Mammary epithelial cell (primary cell): ENCODE measurements at regions of chr18 and their contacts with region 1.

Region 1: DNA sequence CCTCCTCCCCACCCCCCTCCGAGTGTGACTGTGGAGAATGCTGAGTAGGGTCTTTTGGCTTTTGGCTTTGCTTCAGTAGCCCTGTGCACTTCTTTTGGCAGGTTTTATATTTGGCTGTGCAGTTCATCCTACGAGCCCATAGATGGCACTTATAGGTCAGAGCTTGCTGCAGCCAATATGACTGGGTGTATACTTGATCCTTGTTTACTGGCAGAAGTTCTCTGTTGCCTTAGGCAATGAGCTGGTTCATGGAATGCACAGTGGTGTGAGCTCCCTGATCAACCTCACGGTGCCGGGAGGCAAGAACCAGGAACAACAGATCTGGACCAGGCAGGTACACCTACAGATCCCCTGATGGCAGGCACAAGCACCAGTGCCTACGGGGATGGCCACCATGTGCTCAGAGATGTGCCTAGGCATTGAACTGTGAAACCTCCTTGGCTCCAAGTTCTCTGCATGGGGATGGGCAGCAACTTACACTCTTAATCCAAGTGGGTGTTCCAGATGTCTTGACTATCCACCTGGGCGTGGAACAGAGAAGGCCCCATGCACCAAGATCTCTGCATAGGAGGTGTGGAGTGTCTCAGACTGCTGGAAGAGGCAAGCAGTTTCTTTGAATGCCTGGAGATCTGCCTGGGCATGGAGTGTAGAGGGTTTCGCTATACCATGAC is 190.4 kb downstream of the KIAA1328 start:
- DNase-seq: peak; percentile 62
- H3K4me3 ChIP-seq: no peak overlapping the region
- H3K27ac ChIP-seq: no peak overlapping the region
- H3K4me1 ChIP-seq: peaks cover 6% of the 10 kb centered on the region
- H3K27me3 ChIP-seq: no peaks in the 10 kb centered on the region
- CTCF ChIP-seq: peak; percentile 69 to 82

Region 2: GRCh38 chr18:37065254-37065653 is 46.0 kb after region 1 on chr18:
- CTCF ChIA-PET with region 1: interaction called, 10 read pairs
- dilution Hi-C with region 1: no loop called
- in situ Hi-C with region 1: no loop called
- intact Hi-C with region 1: no loop called
- DNase-seq: no peak
- H3K4me3 ChIP-seq: no peak overlapping the region
- H3K27ac ChIP-seq: no peak overlapping the region
- H3K4me1 ChIP-seq: no peaks in the 10 kb centered on the region
- H3K27me3 ChIP-seq: no peaks in the 10 kb centered on the region
- CTCF ChIP-seq: no peak

Region 3: GRCh38 chr18:37253394-37254235 is 234.3 kb after region 1 on chr18:
- CTCF ChIA-PET with region 1: interaction called, 3 read pairs
- dilution Hi-C with region 1: no loop called
- in situ Hi-C with region 1: no loop called
- intact Hi-C with region 1: loop called (anchors 1 kb)
- DNase-seq: no peak
- H3K4me3 ChIP-seq: peak overlapping the region in 2 of 3 experiments; percentile 38 to 39
- H3K27ac ChIP-seq: no peak overlapping the region
- H3K4me1 ChIP-seq: peaks cover 3% of the 10 kb centered on the region
- H3K27me3 ChIP-seq: no peaks in the 10 kb centered on the region
- CTCF ChIP-seq: no peak